HEK293 (cell line): ENCODE measurements at regions of chr1 and their contacts with region 1.

Region 1: DNA sequence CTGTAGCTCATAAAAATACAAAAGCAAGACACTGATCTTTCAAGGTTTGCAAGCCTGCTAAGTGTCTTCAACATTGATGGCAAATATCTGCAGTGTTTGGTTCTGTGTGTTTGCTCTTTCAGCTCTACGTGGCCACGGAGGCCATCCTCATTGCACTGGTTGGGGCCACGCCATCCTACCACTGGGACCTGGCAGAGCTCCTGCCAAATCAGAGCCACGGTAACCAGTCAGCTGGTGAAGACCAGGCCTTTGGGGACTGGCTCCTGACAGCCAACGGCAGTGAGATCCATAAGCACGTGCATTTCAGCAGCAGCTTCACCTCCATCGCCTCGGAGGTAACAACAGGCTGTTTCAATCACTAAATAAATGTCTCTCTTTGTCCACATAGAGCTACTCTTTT is 15.6 kb downstream of the SLC22A15 start:
- H3K4me3 ChIP-seq: no peak overlapping the region
- H3K27ac ChIP-seq: no peak overlapping the region
- H3K4me1 ChIP-seq: no peaks in the 10 kb centered on the region
- CTCF ChIP-seq: no peak

Region 2: DNA sequence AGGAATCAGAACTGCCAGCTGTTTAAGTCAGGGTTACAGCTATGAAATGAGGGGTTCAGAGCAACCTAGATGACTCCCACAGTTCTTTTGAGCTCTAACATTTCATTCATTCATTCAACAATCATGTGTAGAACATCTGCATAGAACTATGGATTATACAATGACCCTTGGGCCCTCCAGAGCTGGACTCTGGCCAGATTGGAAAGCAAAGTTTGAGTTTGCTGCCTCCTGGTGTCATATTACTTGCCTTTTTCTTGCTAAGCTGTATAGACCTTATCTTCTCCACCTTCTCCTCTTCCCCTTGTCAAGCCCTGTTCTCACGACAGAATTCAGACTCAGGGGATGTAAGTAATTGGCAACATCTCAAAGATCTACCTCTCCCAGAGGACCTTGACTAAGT is 227.4 kb before region 1 on chr1:
- CTCF ChIA-PET with region 1: no interaction called
- POLR2A ChIA-PET with region 1: no interaction called
- H3K4me3 ChIP-seq: no peak overlapping the region
- H3K27ac ChIP-seq: no peak overlapping the region
- H3K4me1 ChIP-seq: no peaks in the 10 kb centered on the region
- CTCF ChIP-seq: 0 out of 2 replicates have a peak, but pooled peaks have one; percentile 30

Region 3: GRCh38 chr1:115933625-115934024 is 58.3 kb before region 1 on chr1:
- CTCF ChIA-PET with region 1: no interaction called
- POLR2A ChIA-PET with region 1: no interaction called
- H3K4me3 ChIP-seq: no peak overlapping the region
- H3K27ac ChIP-seq: no peak overlapping the region
- H3K4me1 ChIP-seq: no peaks in the 10 kb centered on the region
- CTCF ChIP-seq: no peak

Region 4: DNA sequence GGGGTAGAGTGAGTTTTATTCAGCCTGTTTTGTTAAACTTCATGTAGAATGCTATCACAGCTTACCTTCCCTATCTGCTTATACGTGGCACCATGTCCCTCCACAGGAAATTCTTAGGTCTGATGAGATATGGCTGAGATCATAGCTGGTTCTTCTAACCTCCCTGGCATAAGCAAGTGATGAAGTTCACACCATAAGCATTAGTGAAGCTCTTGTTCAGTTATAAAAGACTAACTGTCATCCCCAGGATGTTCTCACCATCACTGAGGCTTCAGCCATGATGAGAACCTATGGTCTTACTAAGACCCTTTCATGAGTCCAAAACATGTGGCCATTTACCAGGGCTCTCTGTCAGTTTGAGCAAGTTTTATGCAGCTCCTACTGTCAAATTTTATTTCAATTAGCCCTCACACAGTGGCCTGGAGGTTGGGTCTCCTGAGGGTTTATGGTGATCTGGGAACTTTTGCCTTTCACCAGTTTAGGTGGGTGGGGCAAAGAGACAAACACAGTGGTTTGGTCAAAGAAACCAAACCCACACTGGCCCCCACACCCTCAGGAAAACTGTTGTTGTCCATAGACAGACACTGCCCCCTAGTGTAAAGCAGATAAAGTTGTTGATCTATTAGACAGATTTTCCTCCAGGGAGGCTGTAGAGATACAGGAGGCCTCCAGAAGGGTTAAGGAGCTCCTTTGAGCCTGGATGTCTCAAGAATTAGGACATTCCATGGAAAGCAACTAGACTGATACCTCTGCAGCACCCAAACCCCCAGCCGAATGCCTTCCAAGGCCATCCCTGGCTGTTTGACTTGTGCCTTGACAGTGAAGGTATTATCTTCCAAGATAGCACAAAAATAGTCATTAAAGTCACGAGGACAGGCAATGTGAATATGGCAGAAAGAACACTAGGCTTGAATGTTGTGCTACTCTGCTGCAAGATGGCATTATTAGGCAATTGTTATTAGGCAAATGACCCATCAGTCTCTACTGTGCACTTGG is 10.6 kb before region 1 on chr1:
- CTCF ChIA-PET with region 1: interaction called, 38 read pairs
- POLR2A ChIA-PET with region 1: interaction called, 3 read pairs
- H3K4me3 ChIP-seq: no peak overlapping the region
- H3K27ac ChIP-seq: no peak overlapping the region
- H3K4me1 ChIP-seq: no peaks in the 10 kb centered on the region
- CTCF ChIP-seq: peak; percentile 70

Region 5: GRCh38 chr1:116020668-116021275 is 28.9 kb after region 1 on chr1:
- CTCF ChIA-PET with region 1: interaction called, 10 read pairs
- POLR2A ChIA-PET with region 1: no interaction called
- H3K4me3 ChIP-seq: no peak overlapping the region
- H3K27ac ChIP-seq: no peak overlapping the region
- H3K4me1 ChIP-seq: no peaks in the 10 kb centered on the region
- CTCF ChIP-seq: no peak